ENCODE measurements at regions of chr5 and their contacts with region 1.

Region 1: DNA sequence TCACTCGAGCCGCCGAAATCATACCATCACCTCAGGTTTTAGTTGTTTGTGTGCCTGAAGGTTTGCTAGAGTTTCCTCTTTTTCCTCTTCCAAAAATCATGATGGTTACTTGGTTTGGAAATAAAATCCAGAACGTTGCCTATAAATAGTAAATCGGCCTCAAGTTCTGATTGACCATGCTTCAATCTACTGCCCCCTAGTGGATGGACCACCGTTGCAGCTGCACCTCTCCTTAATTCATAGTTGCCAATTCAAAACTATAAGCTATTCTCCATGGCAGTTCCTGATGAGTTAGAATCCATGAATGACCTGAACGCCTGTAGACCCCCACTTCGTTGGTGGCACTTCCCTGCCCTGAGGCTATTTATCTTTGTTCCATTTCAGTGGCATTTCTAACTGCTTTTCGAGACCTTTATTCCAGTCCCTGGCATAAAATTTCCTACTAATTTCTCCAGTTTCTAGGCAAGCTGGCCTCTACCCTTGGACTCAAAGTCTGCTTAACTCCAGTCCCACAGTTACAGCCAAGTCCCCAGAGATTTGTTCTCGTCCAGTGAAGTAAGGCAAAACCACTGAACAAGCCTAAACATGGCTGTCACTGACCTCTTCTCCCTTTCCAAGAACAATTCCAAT is 422.6 kb downstream of the EFNA5 start:
- DNase-seq: peak; percentile 44 to 61
- H3K4me3 ChIP-seq: no peak overlapping the region
- H3K4me3 Mint-ChIP-seq: no peak overlapping the region
- H3K27ac Mint-ChIP-seq: no peak overlapping the region
- H3K4me1 ChIP-seq: no peaks in the 10 kb centered on the region
- H3K4me1 Mint-ChIP-seq: no peaks in the 10 kb centered on the region
- H3K27me3 ChIP-seq: no peaks in the 10 kb centered on the region
- H3K27me3 Mint-ChIP-seq: peaks cover 9% of the 10 kb centered on the region
- CTCF ChIP-seq: peak; percentile 62 to 79

Region 2: DNA sequence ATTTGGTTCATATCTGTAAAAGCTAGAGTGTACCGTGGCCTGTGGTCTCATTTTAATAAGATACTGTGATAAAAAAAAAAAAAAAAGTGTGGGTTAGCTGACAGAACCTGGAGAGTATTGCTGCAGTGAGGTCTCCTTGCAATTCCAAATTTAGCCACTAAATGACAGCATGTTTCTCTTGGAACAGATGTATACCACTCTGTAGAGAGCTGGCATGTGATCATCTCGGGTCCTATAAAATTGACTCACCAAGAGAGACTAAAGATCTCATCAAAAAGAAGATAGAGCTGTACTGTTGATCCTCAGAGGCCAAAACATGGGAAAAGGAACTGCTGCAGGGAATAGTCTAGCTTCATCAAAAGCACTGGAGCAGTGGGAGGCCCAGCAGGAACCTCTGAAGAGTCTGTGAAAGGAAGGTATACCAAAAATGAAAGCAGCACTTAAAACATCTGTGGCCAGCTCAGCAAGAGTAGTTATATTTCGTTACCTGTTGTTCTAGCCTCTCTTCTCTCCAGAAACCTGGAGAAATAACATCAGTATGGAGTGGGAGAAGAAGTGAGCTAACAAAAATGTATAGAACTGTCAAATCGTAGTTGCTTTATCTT is 404.3 kb before region 1 on chr5:
- CTCF ChIA-PET with region 1: no interaction called
- POLR2A ChIA-PET with region 1: no interaction called
- intact Hi-C with region 1: loop called (anchors 1 kb)
- DNase-seq: peak in 1 of 2 experiments; percentile 34
- H3K4me3 ChIP-seq: no peak overlapping the region
- H3K4me3 Mint-ChIP-seq: no peak overlapping the region
- H3K27ac Mint-ChIP-seq: no peak overlapping the region
- H3K4me1 ChIP-seq: no peaks in the 10 kb centered on the region
- H3K4me1 Mint-ChIP-seq: no peaks in the 10 kb centered on the region
- H3K27me3 ChIP-seq: no peaks in the 10 kb centered on the region
- H3K27me3 Mint-ChIP-seq: no peaks in the 10 kb centered on the region
- CTCF ChIP-seq: peak; percentile 25 to 36

Region 3: GRCh38 chr5:106974272-106974671 is 273.9 kb before region 1 on chr5:
- CTCF ChIA-PET with region 1: no interaction called
- POLR2A ChIA-PET with region 1: no interaction called
- intact Hi-C with region 1: no loop called
- DNase-seq: no peak
- H3K4me3 ChIP-seq: no peak overlapping the region
- H3K4me3 Mint-ChIP-seq: no peak overlapping the region
- H3K27ac Mint-ChIP-seq: no peak overlapping the region
- H3K4me1 ChIP-seq: no peaks in the 10 kb centered on the region
- H3K4me1 Mint-ChIP-seq: no peaks in the 10 kb centered on the region
- H3K27me3 ChIP-seq: no peaks in the 10 kb centered on the region
- H3K27me3 Mint-ChIP-seq: no peaks in the 10 kb centered on the region
- CTCF ChIP-seq: no peak

Region 4: GRCh38 chr5:107104040-107104995 is 143.9 kb before region 1 on chr5:
- CTCF ChIA-PET with region 1: no interaction called
- POLR2A ChIA-PET with region 1: no interaction called
- intact Hi-C with region 1: loop called (anchors 5 kb)
- DNase-seq: peak in 1 of 2 experiments; percentile 28
- H3K4me3 ChIP-seq: no peak overlapping the region
- H3K4me3 Mint-ChIP-seq: no peak overlapping the region
- H3K27ac Mint-ChIP-seq: no peak overlapping the region
- H3K4me1 ChIP-seq: no peaks in the 10 kb centered on the region
- H3K4me1 Mint-ChIP-seq: no peaks in the 10 kb centered on the region
- H3K27me3 ChIP-seq: no peaks in the 10 kb centered on the region
- H3K27me3 Mint-ChIP-seq: peaks cover 2% of the 10 kb centered on the region
- CTCF ChIP-seq: peak in 1 of 2 experiments; percentile 47